ENCODE measurements at regions of chr6 and their contacts with region 1.

Region 1: DNA sequence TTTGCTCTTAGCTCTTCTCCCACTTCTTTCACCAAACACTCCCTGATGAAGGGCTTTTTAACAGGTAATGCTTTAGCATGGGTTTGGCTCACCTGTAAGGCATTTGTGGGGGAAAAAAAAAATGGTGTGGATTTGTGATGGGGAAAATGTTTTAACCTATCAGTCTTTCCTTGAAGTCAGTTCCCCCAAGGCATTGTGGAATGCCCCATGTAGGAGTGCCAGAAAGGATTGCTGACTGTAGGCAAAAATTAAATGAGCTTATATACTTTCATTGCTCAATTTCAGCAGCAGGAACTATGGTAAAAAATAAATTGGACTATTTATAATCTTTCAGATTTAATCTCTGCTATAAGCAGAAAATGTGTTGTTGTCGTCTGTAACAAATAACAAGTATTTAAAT is 10.6 kb upstream of the SASH1 start:
- DNase-seq: no peak
- H3K4me3 ChIP-seq: no peak overlapping the region
- H3K4me3 Mint-ChIP-seq: no peak overlapping the region
- H3K27ac Mint-ChIP-seq: no peak overlapping the region
- H3K4me1 ChIP-seq: 0 out of 2 replicates have a peak, but pooled peaks cover 15% of the 10 kb centered on the region
- H3K4me1 Mint-ChIP-seq: peaks cover 7% of the 10 kb centered on the region
- H3K27me3 ChIP-seq: no peaks in the 10 kb centered on the region
- H3K27me3 Mint-ChIP-seq: no peaks in the 10 kb centered on the region
- CTCF ChIP-seq: no peak

Region 2: GRCh38 chr6:148250975-148251685 is 81.0 kb before region 1 on chr6:
- CTCF ChIA-PET with region 1: no interaction called
- POLR2A ChIA-PET with region 1: no interaction called
- intact Hi-C with region 1: no loop called
- DNase-seq: peak in 1 of 2 experiments; percentile 21
- H3K4me3 ChIP-seq: no peak overlapping the region
- H3K4me3 Mint-ChIP-seq: no peak overlapping the region
- H3K27ac Mint-ChIP-seq: no peak overlapping the region
- H3K4me1 ChIP-seq: no peaks in the 10 kb centered on the region
- H3K4me1 Mint-ChIP-seq: no peaks in the 10 kb centered on the region
- H3K27me3 ChIP-seq: no peaks in the 10 kb centered on the region
- H3K27me3 Mint-ChIP-seq: no peaks in the 10 kb centered on the region
- CTCF ChIP-seq: peak; percentile 33 to 51

Region 3: GRCh38 chr6:148287623-148288333 is 44.3 kb before region 1 on chr6:
- CTCF ChIA-PET with region 1: no interaction called
- POLR2A ChIA-PET with region 1: no interaction called
- intact Hi-C with region 1: no loop called
- DNase-seq: no peak
- H3K4me3 ChIP-seq: no peak overlapping the region
- H3K4me3 Mint-ChIP-seq: no peak overlapping the region
- H3K27ac Mint-ChIP-seq: no peak overlapping the region
- H3K4me1 ChIP-seq: 0 out of 2 replicates have a peak, but pooled peaks cover 4% of the 10 kb centered on the region
- H3K4me1 Mint-ChIP-seq: no peaks in the 10 kb centered on the region
- H3K27me3 ChIP-seq: no peaks in the 10 kb centered on the region
- H3K27me3 Mint-ChIP-seq: no peaks in the 10 kb centered on the region
- CTCF ChIP-seq: no peak

Region 4: GRCh38 chr6:148464319-148465010 is 132.4 kb after region 1 on chr6:
- CTCF ChIA-PET with region 1: no interaction called
- POLR2A ChIA-PET with region 1: no interaction called
- intact Hi-C with region 1: loop called (anchors 2 kb)
- DNase-seq: peak; percentile 58 to 77
- H3K4me3 ChIP-seq: no peak overlapping the region
- H3K4me3 Mint-ChIP-seq: no peak overlapping the region
- H3K27ac Mint-ChIP-seq: peak overlapping the region; percentile 74
- H3K4me1 ChIP-seq: peaks cover 12% of the 10 kb centered on the region
- H3K4me1 Mint-ChIP-seq: peaks cover 13% of the 10 kb centered on the region
- H3K27me3 ChIP-seq: no peaks in the 10 kb centered on the region
- H3K27me3 Mint-ChIP-seq: no peaks in the 10 kb centered on the region
- CTCF ChIP-seq: peak; percentile 87 to 89

Measured in Caco-2 (cell line).